ENCODE measurements at regions of chr2 and their contacts with region 1.

Region 1: DNA sequence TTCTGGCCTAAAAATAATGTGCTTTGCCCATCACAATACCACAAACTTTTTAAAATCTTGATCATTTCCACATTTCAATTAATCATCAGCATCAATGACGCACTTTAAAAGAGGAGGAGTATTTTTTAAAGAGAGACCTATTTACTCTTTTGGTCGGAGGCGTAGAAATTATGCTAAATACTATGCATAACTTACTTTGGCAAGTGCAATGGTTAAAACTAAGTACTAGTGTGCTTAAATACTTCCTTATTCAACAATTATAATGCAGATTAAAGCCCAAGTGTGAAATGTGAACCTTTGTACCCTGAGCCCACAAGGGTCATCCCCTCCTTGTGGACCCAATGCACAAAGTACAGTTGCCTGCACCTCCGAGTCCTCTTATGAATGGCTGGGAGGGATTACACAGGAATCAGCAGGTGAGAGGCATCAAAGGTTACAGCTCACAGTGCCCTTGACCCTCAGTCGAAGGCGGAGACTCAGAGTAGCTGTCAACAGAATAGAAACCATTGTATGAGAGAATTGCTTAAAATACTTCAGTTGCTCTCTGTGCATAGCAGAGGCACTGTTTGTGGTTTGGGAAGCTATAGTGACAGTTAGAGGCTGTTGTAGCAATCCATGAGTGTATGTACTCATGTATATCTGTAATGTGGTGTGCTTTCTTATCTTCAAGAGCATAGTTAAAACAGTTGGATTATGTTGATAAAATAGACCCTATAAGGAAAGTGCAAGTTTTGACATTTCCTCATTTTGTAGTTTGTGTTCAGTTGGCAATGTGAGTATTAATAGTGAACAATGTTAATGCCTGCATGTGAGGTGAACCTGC is 151.7 kb upstream of the ITGA4 start:
- DNase-seq: peak in 4 of 5 donors; percentile 38 to 71 (median 44)
- H3K4me3 ChIP-seq: peak overlapping the region in 1 of 2 donors; percentile 16
- H3K4me3 Mint-ChIP-seq: peak overlapping the region; percentile 64 to 81 (median 72)
- H3K27ac ChIP-seq: peak overlapping the region; percentile 73
- H3K27ac Mint-ChIP-seq: peak overlapping the region; percentile 88 to 97 (median 92)
- H3K4me1 ChIP-seq: peaks cover 91% of the 10 kb centered on the region
- H3K4me1 Mint-ChIP-seq: peaks cover 53 to 80% (median 65%) of the 10 kb centered on the region in 4 donors
- H3K27me3 ChIP-seq: no peaks in the 10 kb centered on the region
- H3K27me3 Mint-ChIP-seq: no peaks in the 10 kb centered on the region

Region 2: GRCh38 chr2:180730976-180731375 is 574.5 kb before region 1 on chr2:
- CTCF ChIA-PET with region 1: no interaction called
- POLR2A ChIA-PET with region 1: no interaction called
- intact Hi-C with region 1: no loop called
- DNase-seq: no peak
- H3K4me3 ChIP-seq: no peak overlapping the region
- H3K4me3 Mint-ChIP-seq: no peak overlapping the region
- H3K27ac ChIP-seq: no peak overlapping the region
- H3K27ac Mint-ChIP-seq: no peak overlapping the region
- H3K4me1 ChIP-seq: no peaks in the 10 kb centered on the region
- H3K4me1 Mint-ChIP-seq: no peaks in the 10 kb centered on the region
- H3K27me3 ChIP-seq: no peaks in the 10 kb centered on the region
- H3K27me3 Mint-ChIP-seq: peaks cover 1 to 5% of the 10 kb centered on the region in 2 donors

Region 3: GRCh38 chr2:181123798-181124231 is 181.7 kb before region 1 on chr2:
- CTCF ChIA-PET with region 1: interaction called, 6 read pairs
- POLR2A ChIA-PET with region 1: interaction called, 22 read pairs
- intact Hi-C with region 1: loop called (anchors 2 kb)
- DNase-seq: peak; percentile 78 to 89 (median 87)
- H3K4me3 ChIP-seq: peak overlapping the region in 1 of 2 donors; percentile 36
- H3K4me3 Mint-ChIP-seq: peak overlapping the region; percentile 76 to 90 (median 80)
- H3K27ac ChIP-seq: peak overlapping the region; percentile 78
- H3K27ac Mint-ChIP-seq: peak overlapping the region; percentile 96 to 99 (median 97)
- H3K4me1 ChIP-seq: peaks cover 83% of the 10 kb centered on the region
- H3K4me1 Mint-ChIP-seq: peaks cover 43 to 76% (median 50%) of the 10 kb centered on the region in 4 donors
- H3K27me3 ChIP-seq: no peaks in the 10 kb centered on the region
- H3K27me3 Mint-ChIP-seq: no peaks in the 10 kb centered on the region

Region 4: DNA sequence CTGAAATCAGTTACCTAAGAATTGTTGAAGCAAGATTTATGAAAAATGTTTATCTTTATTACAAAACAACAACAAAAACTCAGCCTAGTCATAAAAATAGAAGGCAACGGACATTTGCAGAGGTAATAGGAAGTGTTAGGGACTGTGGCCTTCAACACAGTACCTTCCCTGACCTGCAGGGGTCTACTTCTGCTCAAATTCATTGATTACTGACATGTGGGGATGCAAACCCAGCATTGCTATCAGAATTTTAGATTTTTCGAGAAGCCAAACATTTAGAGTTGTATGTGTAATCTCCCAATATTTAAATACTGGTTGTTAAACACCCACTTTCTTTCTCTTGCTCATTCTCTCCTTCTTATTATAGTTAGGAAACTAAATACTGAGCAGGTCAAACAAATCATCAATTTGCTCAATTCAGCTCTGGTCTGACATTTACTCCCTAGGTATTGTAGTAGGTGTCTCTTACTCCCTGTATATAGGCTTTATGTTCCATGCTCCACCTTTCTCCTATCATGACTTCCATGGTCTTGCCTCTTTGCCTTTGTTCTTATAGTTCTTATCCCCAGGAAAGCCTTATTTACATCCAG is 126.6 kb before region 1 on chr2:
- CTCF ChIA-PET with region 1: interaction called, 4 read pairs
- POLR2A ChIA-PET with region 1: interaction called, 3 read pairs
- intact Hi-C with region 1: loop called (anchors 5 kb)
- DNase-seq: peak in 4 of 5 donors; percentile 29 to 43 (median 37)
- H3K4me3 ChIP-seq: no peak overlapping the region
- H3K4me3 Mint-ChIP-seq: peak overlapping the region in 4 of 8 donors; percentile 19 to 41 (median 34)
- H3K27ac ChIP-seq: peak overlapping the region; percentile 1
- H3K27ac Mint-ChIP-seq: peak overlapping the region; percentile 12 to 90 (median 54)
- H3K4me1 ChIP-seq: peaks cover 52% of the 10 kb centered on the region
- H3K4me1 Mint-ChIP-seq: peaks cover 31 to 39% (median 36%) of the 10 kb centered on the region in 4 donors
- H3K27me3 ChIP-seq: no peaks in the 10 kb centered on the region
- H3K27me3 Mint-ChIP-seq: no peaks in the 10 kb centered on the region

Region 5: GRCh38 chr2:181275643-181276070 is 29.9 kb before region 1 on chr2:
- CTCF ChIA-PET with region 1: interaction called, 6 read pairs
- POLR2A ChIA-PET with region 1: interaction called, 15 read pairs
- intact Hi-C with region 1: loop called (anchors 2 kb)
- DNase-seq: peak; percentile 17 to 45 (median 43)
- H3K4me3 ChIP-seq: no peak overlapping the region
- H3K4me3 Mint-ChIP-seq: peak overlapping the region in 6 of 8 donors; percentile 12 to 69 (median 40)
- H3K27ac ChIP-seq: peak overlapping the region; percentile 31
- H3K27ac Mint-ChIP-seq: peak overlapping the region; percentile 57 to 92 (median 78)
- H3K4me1 ChIP-seq: peaks cover 40% of the 10 kb centered on the region
- H3K4me1 Mint-ChIP-seq: peaks cover 26 to 54% (median 37%) of the 10 kb centered on the region in 4 donors
- H3K27me3 ChIP-seq: no peaks in the 10 kb centered on the region
- H3K27me3 Mint-ChIP-seq: no peaks in the 10 kb centered on the region

Region 6: GRCh38 chr2:181319286-181319685 is 13.8 kb after region 1 on chr2:
- CTCF ChIA-PET with region 1: interaction called, 4 read pairs
- POLR2A ChIA-PET with region 1: interaction called, 101 read pairs
- intact Hi-C with region 1: no loop called
- DNase-seq: no peak
- H3K4me3 ChIP-seq: no peak overlapping the region
- H3K4me3 Mint-ChIP-seq: no peak overlapping the region
- H3K27ac ChIP-seq: no peak overlapping the region
- H3K27ac Mint-ChIP-seq: no peak overlapping the region
- H3K4me1 ChIP-seq: peaks cover 11% of the 10 kb centered on the region
- H3K4me1 Mint-ChIP-seq: peaks cover 3 to 17% (median 4%) of the 10 kb centered on the region in 4 donors
- H3K27me3 ChIP-seq: no peaks in the 10 kb centered on the region
- H3K27me3 Mint-ChIP-seq: no peaks in the 10 kb centered on the region

Region 7: DNA sequence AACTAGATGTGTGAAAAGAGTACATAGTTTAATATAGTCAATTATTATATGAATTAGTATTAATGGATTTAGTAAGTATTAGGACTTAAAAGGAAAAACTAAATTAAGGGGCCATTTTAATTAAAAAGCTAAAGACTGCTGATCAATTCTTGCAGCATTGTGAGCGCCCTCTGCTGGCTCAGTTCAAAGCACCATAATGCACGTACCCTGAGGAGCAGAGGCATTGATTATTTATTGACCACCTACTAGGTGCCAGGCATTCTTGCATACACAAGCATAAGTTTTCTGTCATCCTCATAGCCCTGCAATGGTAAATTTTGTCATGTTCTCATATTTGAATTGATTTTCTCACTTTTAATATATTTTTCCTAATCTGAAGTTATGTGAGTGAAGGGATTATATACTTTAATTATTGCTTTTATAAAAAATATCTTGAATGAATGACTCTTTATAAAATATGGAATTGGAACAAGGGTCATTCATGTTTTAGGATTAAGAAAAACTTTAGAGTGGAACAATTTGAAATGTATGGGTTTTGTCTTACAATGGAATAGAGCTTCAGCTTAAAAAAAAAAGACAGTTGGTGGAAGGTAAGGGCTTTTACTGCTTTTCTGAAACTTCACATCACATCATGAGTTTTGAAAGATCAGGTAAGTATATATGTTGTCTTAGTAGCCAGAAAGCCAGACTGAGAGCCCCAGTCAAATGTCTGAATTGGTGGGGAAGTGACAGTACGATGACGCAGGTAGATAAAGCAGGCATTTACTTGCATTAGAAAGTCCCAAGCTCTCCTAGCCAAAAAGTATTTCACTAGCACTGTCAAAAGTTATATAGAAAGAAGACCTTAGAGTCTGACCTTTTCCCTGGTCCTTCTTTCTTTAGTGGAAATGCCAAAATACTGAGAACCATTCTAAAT is 161.4 kb after region 1 on chr2:
- CTCF ChIA-PET with region 1: interaction called, 11 read pairs
- POLR2A ChIA-PET with region 1: interaction called, 374 read pairs
- intact Hi-C with region 1: no loop called
- DNase-seq: peak; percentile 65 to 75 (median 68)
- H3K4me3 ChIP-seq: no peak overlapping the region
- H3K4me3 Mint-ChIP-seq: peak overlapping the region; percentile 55 to 77 (median 64)
- H3K27ac ChIP-seq: peak overlapping the region; percentile 56
- H3K27ac Mint-ChIP-seq: peak overlapping the region; percentile 87 to 96 (median 93)
- H3K4me1 ChIP-seq: peaks cover 86% of the 10 kb centered on the region
- H3K4me1 Mint-ChIP-seq: peaks cover 66 to 91% (median 71%) of the 10 kb centered on the region in 4 donors
- H3K27me3 ChIP-seq: no peaks in the 10 kb centered on the region
- H3K27me3 Mint-ChIP-seq: no peaks in the 10 kb centered on the region

Region 8: GRCh38 chr2:181752301-181752700 is 446.8 kb after region 1 on chr2:
- CTCF ChIA-PET with region 1: no interaction called
- POLR2A ChIA-PET with region 1: no interaction called
- intact Hi-C with region 1: no loop called
- DNase-seq: no peak
- H3K4me3 ChIP-seq: no peak overlapping the region
- H3K4me3 Mint-ChIP-seq: no peak overlapping the region
- H3K27ac ChIP-seq: no peak overlapping the region
- H3K27ac Mint-ChIP-seq: no peak overlapping the region
- H3K4me1 ChIP-seq: no peaks in the 10 kb centered on the region
- H3K4me1 Mint-ChIP-seq: no peaks in the 10 kb centered on the region
- H3K27me3 ChIP-seq: no peaks in the 10 kb centered on the region
- H3K27me3 Mint-ChIP-seq: peaks cover 28 to 29% of the 10 kb centered on the region in 2 donors

Region 9: GRCh38 chr2:181946498-181947127 is 641.1 kb after region 1 on chr2:
- CTCF ChIA-PET with region 1: no interaction called
- POLR2A ChIA-PET with region 1: no interaction called
- intact Hi-C with region 1: no loop called
- DNase-seq: no peak
- H3K4me3 ChIP-seq: no peak overlapping the region
- H3K4me3 Mint-ChIP-seq: no peak overlapping the region
- H3K27ac ChIP-seq: no peak overlapping the region
- H3K27ac Mint-ChIP-seq: no peak overlapping the region
- H3K4me1 ChIP-seq: no peaks in the 10 kb centered on the region
- H3K4me1 Mint-ChIP-seq: no peaks in the 10 kb centered on the region
- H3K27me3 ChIP-seq: no peaks in the 10 kb centered on the region
- H3K27me3 Mint-ChIP-seq: peaks cover 20 to 31% of the 10 kb centered on the region in 2 donors

Measured in CD4-positive, alpha-beta memory T cell (primary cell).